A549 (cell line): ENCODE measurements at regions of chr11 and their contacts with region 1.

Region 1: GRCh38 chr11:72314600-72315392 is 70.8 kb upstream of the PHOX2A start:
- DNase-seq: no peak
- ATAC-seq: no peak
- H3K4me3 ChIP-seq: no peak overlapping the region
- H3K27ac ChIP-seq: no peak overlapping the region
- H3K4me1 ChIP-seq: no peaks in the 10 kb centered on the region
- CTCF ChIP-seq: no peak
- EP300 ChIP-seq: no peak
- POLR2A ChIP-seq: no peak
- RAD21 ChIP-seq: no peak

Region 2: GRCh38 chr11:72328366-72329224 is 13.8 kb after region 1 on chr11:
- CTCF ChIA-PET with region 1: interaction called, 18 read pairs
- POLR2A ChIA-PET with region 1: no interaction called
- DNase-seq: peak in 1 of 2 experiments; percentile 5
- ATAC-seq: peak in 1 of 2 experiments; percentile 63; a peak in 2 of 6 replicates
- H3K4me3 ChIP-seq: no peak overlapping the region
- H3K27ac ChIP-seq: no peak overlapping the region
- H3K4me1 ChIP-seq: peaks cover 12% of the 10 kb centered on the region; the same call in 1 of the 3 replicates
- CTCF ChIP-seq: no peak
- EP300 ChIP-seq: no peak
- POLR2A ChIP-seq: no peak
- RAD21 ChIP-seq: peak in 1 of 2 experiments; percentile 19; a peak in 1 of 5 replicates

Region 3: GRCh38 chr11:72585762-72586311 is 271.0 kb after region 1 on chr11:
- CTCF ChIA-PET with region 1: no interaction called
- POLR2A ChIA-PET with region 1: no interaction called
- DNase-seq: peak; percentile 64 to 77
- ATAC-seq: peak; percentile 27 to 75; a peak in 3 of 6 replicates
- H3K4me3 ChIP-seq: no peak overlapping the region
- H3K27ac ChIP-seq: no peak overlapping the region
- H3K4me1 ChIP-seq: 0 out of 3 replicates have a peak, but pooled peaks cover 6% of the 10 kb centered on the region
- CTCF ChIP-seq: peak; percentile 87
- EP300 ChIP-seq: no peak
- POLR2A ChIP-seq: no peak
- RAD21 ChIP-seq: peak; percentile 69 to 72